GM18951 (cell line): ENCODE measurements at regions of chr16 and their contacts with region 1.

Region 1: GRCh38 chr16:75764154-75764768 is 38.0 kb upstream of the CPHXL start:
- POLR2A ChIP-seq: no peak

Region 2: DNA sequence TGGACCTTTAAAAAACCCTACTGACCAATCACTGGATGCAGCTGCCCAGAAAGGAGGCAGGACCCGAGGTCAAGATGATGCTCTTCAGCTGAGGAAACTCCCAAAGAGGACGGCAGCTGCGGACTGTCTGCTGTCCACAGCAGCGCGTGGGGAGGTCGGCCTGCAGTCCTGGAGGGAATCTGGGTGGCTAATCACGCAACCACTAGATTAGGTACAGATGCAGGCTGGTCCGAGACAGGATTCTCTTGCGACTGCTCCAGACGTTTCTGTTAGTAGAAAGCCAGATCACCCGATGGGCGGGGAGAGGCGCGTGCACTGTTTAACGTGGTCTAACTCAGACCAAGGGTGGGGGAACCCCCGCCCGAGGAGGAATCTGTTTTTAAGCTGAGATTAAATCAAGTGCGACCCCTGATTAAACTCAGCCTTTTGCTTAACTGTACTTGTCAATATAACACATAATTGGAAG is 566.1 kb before region 1 on chr16:
- in situ Hi-C with region 1: loop called (anchors 25 kb)
- POLR2A ChIP-seq: no peak

Region 3: DNA sequence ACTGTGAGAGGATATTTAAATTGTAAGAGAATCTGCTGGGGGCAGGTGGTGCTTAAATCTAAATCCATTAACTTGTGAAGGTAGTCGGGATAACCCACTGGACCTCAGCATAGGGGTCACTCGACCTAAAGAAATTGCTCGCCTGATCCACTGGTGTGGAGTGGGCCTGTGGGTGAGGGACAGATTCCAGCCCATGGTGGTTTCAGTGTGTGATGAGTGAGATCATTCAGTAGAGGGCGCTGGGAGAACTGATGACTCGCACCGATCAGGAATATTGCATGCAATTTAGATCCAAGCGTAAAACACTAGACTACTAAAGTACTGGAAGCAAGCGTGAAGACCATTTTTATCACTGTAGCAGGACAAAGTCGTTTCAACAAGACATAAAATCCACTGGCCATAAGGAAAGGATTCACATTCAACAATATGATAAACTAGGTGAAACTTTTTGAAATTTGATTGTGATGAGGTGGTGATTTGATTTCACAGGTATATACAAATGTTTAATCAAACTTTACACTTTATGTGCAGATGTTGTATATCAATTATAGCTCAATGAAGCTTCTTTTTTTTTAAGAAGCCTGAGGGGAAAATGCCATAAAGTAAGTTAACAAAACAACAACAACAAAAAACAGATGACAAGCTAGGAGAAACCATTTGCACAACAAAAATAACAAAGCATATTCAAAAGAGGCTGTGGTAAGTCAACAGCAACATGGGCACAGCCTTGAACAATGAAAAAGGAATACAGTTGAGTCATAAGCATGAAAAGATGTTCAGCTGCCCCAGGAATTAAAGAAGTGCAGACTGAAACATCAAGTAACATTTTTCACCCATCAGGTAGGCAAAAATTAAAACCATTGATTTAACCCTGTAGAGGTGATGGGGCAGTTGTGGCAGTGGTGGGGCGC is 292.3 kb before region 1 on chr16:
- in situ Hi-C with region 1: loop called (anchors 5 kb)
- POLR2A ChIP-seq: no peak

Region 4: GRCh38 chr16:75541236-75541635 is 223.0 kb before region 1 on chr16:
- in situ Hi-C with region 1: loop called (anchors 10 kb)
- POLR2A ChIP-seq: no peak

Region 5: DNA sequence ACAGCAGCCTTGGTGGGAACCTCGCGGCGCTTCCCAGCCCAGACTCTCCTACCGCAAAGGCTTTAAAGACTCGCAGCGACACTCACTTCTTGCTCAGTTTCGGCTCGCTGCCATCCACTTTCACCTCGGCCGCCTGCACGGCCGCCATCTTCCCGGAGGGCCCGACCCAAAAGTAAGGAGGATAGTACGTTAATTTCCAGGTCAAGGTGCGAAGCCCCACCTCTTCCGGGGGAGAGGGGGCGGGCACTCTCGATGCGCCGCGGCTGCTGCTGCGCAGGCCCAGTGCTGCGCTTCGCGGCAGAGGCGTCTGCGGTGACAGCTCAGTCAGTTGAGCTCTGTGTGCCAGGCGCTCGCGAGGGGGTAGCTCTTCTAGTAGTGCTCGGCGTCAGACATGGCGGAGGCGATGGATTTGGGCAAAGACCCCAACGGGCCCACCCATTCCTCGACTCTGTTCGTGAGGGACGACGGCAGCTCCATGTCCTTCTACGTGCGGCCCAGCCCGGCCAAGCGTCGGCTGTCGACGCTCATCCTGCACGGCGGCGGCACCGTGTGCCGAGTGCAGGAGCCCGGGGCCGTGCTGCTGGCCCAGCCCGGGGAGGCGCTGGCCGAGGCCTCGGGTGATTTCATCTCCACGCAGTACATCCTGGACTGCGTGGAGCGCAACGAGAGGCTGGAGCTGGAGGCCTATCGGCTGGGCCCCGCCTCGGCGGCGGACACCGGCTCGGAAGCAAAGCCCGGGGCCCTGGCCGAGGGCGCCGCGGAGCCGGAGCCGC is 116.6 kb before region 1 on chr16 and contains the starts of genes KARS1 and TERF2IP:
- in situ Hi-C with region 1: loop called (anchors 10 kb)
- POLR2A ChIP-seq: peak; percentile 94